ENCODE measurements at regions of chrX and their contacts with region 1.

Region 1: GRCh38 chrX:103686199-103687072 is at the start of gene MORF4L2:
- DNase-seq: peak; percentile 93
- H3K4me3 Mint-ChIP-seq: peak within 1 kb of the TSS; percentile 83
- H3K27ac Mint-ChIP-seq: peak within 1 kb of the TSS; percentile 90
- H3K4me1 Mint-ChIP-seq: peaks cover 9% of the 10 kb centered on the region
- H3K27me3 Mint-ChIP-seq: no peaks in the 10 kb centered on the region
- total RNA-seq, gene MORF4L2: 184 to 191 TPM

Region 2: GRCh38 chrX:102659790-102660757 is 1026.4 kb before region 1 on chrX:
- CTCF ChIA-PET with region 1: no interaction called
- POLR2A ChIA-PET with region 1: no interaction called
- intact Hi-C with region 1: loop called (anchors 10 kb)
- DNase-seq: peak; percentile 90
- H3K4me3 Mint-ChIP-seq: peak overlapping the region; percentile 90
- H3K27ac Mint-ChIP-seq: peak overlapping the region; percentile 73
- H3K4me1 Mint-ChIP-seq: peaks cover 18% of the 10 kb centered on the region
- H3K27me3 Mint-ChIP-seq: no peaks in the 10 kb centered on the region

Region 3: DNA sequence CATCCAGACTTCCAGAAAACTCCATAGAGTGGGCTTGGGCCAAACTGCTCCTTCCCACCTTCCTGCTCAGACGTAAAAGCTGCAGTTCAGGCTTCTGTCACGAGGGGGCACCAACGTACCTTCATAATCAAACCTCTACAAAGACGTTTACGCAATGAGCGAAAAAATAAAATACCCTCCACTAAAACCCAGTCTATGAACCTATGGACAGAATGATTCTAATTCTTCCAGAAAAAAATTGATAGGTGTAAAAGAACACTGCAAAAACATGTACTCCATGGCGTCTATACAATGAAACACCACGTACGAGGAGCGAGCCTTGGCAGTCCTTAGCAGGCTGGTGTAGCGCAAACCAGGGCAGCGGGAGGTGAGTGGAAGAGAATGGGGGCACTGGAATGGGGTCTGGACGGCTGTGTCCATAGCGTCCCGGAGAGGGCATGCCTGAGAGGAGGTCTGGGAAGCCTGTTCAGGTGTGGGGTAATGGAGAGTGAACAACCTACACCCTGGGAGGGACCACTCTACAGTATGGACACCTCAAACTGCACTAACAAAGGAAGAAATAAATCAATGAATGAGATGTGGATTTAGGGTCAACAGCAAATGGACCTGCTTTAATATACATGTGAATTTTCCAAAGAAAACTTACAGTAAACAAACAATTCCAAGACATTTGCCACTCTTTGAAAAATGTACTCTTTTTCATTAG is 152.8 kb before region 1 on chrX:
- CTCF ChIA-PET with region 1: interaction called, 8 read pairs
- POLR2A ChIA-PET with region 1: no interaction called
- intact Hi-C with region 1: loop called (anchors 5 kb)
- DNase-seq: peak; percentile 76
- H3K4me3 Mint-ChIP-seq: no peak overlapping the region
- H3K27ac Mint-ChIP-seq: no peak overlapping the region
- H3K4me1 Mint-ChIP-seq: peaks cover 3% of the 10 kb centered on the region
- H3K27me3 Mint-ChIP-seq: no peaks in the 10 kb centered on the region

Region 4: GRCh38 chrX:103585411-103586313 is 100.8 kb before region 1 on chrX and contains the start of gene TCEAL4:
- CTCF ChIA-PET with region 1: no interaction called
- POLR2A ChIA-PET with region 1: no interaction called
- intact Hi-C with region 1: loop called (anchors 1 kb)
- DNase-seq: peak; percentile 47
- H3K4me3 Mint-ChIP-seq: peak within 1 kb of the TSS; percentile 82
- H3K27ac Mint-ChIP-seq: no peak within 1 kb of the TSS
- H3K4me1 Mint-ChIP-seq: peaks cover 9% of the 10 kb centered on the region
- H3K27me3 Mint-ChIP-seq: peaks cover under 1% of the 10 kb centered on the region
- total RNA-seq, gene TCEAL4: 12.4 to 13.3 TPM

Region 5: DNA sequence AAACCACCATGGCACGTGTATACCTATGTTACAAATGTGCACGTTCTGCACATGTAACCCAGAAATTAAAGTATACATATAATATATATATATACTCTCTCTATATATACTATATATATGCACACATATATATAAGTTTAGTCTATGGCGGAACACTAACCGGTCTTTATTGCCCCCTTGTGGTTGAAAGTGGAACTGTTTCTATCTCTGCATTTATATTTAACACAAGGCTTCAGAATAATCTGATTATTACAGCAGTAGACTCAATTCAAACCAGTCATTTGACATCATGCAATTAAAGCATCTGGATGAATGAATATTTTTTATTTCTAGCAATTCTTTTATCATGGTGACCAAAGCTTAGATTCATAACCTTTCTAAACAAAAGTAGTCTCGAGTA is 131.1 kb after region 1 on chrX:
- CTCF ChIA-PET with region 1: interaction called, 6 read pairs
- POLR2A ChIA-PET with region 1: no interaction called
- intact Hi-C with region 1: loop called (anchors 1 kb)
- DNase-seq: no peak
- H3K4me3 Mint-ChIP-seq: no peak overlapping the region
- H3K27ac Mint-ChIP-seq: no peak overlapping the region
- H3K4me1 Mint-ChIP-seq: peaks cover 4% of the 10 kb centered on the region
- H3K27me3 Mint-ChIP-seq: peaks cover 10% of the 10 kb centered on the region

Region 6: GRCh38 chrX:103918581-103919269 is 232.3 kb after region 1 on chrX:
- CTCF ChIA-PET with region 1: no interaction called
- POLR2A ChIA-PET with region 1: interaction called, 6 read pairs
- intact Hi-C with region 1: loop called (anchors 1 kb)
- DNase-seq: peak; percentile 78
- H3K4me3 Mint-ChIP-seq: peak overlapping the region; percentile 91
- H3K27ac Mint-ChIP-seq: peak overlapping the region; percentile 94
- H3K4me1 Mint-ChIP-seq: peaks cover 18% of the 10 kb centered on the region
- H3K27me3 Mint-ChIP-seq: no peaks in the 10 kb centered on the region

Region 7: GRCh38 chrX:104156630-104157529 is 470.4 kb after region 1 on chrX and contains the start of gene SLC25A53:
- CTCF ChIA-PET with region 1: no interaction called
- POLR2A ChIA-PET with region 1: interaction called, 6 read pairs
- intact Hi-C with region 1: loop called (anchors 1 kb)
- DNase-seq: peak; percentile 87
- H3K4me3 Mint-ChIP-seq: peak within 1 kb of the TSS; percentile 99
- H3K27ac Mint-ChIP-seq: peak within 1 kb of the TSS; percentile 100
- H3K4me1 Mint-ChIP-seq: peaks cover 15% of the 10 kb centered on the region
- H3K27me3 Mint-ChIP-seq: no peaks in the 10 kb centered on the region
- total RNA-seq, gene SLC25A53: 3.6 to 4.2 TPM

Measured in activated CD4-positive, alpha-beta memory T cell treated with anti-CD3 and anti-CD28 coated beads for 36 hours (primary cell).